Activated CD4-positive, alpha-beta memory T cell treated with anti-CD3 and anti-CD28 coated beads for 36 hours (primary cell): ENCODE measurements at regions of chr2 and their contacts with region 1.

Region 1: GRCh38 chr2:208025037-208025813 is at the start of gene PLEKHM3:
- DNase-seq: peak; percentile 86
- H3K4me3 Mint-ChIP-seq: peak within 1 kb of the TSS; percentile 90
- H3K27ac Mint-ChIP-seq: peak within 1 kb of the TSS; percentile 90
- H3K4me1 Mint-ChIP-seq: peaks cover 14% of the 10 kb centered on the region
- H3K27me3 Mint-ChIP-seq: no peaks in the 10 kb centered on the region
- total RNA-seq, gene PLEKHM3: 4.5 to 5.5 TPM

Region 2: DNA sequence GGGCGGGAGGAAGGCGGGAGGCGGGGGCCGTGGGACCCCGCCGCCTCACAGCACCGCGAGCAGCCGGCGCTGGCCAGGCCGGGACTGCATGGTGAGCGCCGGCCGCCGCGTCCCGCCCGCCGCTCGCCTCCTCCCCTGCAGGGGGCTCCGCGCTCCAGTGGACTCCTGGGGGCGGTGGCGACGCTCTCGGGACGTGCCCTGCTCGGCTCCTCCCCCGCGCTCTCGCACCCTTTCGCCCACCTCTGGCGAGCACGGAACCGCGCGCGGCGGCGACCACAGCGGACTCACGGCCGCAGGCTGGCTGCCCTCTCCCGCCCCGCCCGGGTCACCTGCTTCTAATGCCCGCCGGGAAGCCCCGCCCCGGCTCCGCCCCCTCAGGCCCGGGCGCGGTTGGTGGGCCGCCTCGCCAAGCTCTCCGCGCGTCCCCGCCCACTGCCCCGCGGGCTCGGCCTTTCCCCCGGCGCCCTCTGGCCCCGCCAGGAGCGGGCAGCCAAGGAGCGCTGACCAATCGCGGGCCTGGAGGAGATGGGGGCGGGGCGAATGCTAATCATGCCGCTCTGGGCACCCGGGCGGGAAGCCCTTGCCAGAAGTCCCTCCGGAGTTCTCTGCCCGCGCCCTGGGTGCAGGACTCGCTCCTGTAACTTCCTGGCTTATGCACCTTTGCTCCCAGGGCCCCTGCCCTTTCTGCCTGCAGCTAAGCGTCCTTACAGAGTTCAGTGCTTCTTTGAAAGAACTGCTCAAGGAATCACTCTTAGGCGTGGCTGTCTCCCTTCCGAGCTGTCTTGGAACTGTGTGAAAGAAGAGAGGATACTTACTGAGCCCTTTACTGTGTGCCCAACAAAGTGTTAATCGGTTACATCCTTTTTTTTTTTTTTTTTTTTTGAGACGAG is 255.4 kb before region 1 on chr2 and contains the start of gene FZD5:
- CTCF ChIA-PET with region 1: interaction called, 7 read pairs
- POLR2A ChIA-PET with region 1: no interaction called
- intact Hi-C with region 1: loop called (anchors 1 kb)
- DNase-seq: peak; percentile 92
- H3K4me3 Mint-ChIP-seq: peak within 1 kb of the TSS; percentile 78
- H3K27ac Mint-ChIP-seq: no peak within 1 kb of the TSS
- H3K4me1 Mint-ChIP-seq: peaks cover 31% of the 10 kb centered on the region
- H3K27me3 Mint-ChIP-seq: peaks cover 30% of the 10 kb centered on the region
- total RNA-seq, gene FZD5: 1.3 to 1.7 TPM

Region 3: DNA sequence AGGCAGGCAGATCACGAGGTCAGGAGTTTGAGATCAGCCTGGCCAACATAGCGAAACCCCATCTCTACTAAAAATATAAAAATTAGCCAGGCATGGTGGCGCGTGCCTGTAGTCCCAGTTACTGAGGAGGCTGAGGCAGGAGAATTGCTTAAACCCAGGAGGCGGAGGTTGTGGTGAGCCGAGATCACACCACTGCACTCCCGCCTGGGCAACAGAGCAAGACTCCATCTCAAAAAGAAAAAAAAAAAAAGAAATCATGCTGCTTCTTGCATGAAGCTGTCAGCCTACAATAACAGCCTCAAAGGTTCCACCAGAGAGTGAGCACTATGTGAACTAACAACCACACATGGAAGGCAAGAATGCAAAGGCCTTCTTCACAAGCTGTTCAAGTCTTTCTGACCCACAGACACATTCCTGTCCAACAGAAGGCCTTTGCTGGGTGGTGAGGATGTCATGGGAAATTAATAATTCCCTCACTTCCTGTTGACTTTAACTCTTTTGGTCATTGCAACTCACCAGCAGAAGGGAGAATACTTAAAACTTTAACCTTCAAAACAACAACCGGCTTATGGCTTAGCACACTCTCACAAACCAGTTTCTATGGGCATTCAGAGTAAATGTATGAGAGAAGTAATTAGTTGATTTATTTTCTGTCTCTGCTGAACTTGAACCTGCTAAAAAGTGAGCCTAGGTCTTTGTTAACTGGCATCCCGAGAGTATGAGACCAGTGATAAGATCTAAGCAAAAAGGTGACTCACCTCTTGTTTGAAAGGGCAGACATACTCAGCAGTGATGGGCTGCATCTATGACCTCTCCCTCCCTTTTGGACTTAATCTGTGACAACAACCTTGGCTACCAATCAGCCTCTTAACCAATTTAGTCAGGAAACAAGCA is 11.7 kb before region 1 on chr2:
- CTCF ChIA-PET with region 1: no interaction called
- POLR2A ChIA-PET with region 1: interaction called, 3 read pairs
- intact Hi-C with region 1: loop called (anchors 1 kb)
- DNase-seq: peak; percentile 20
- H3K4me3 Mint-ChIP-seq: no peak overlapping the region
- H3K27ac Mint-ChIP-seq: peak overlapping the region; percentile 3
- H3K4me1 Mint-ChIP-seq: peaks cover 44% of the 10 kb centered on the region
- H3K27me3 Mint-ChIP-seq: no peaks in the 10 kb centered on the region